ENCODE measurements at regions of chr4 and their contacts with region 1.

Region 1: DNA sequence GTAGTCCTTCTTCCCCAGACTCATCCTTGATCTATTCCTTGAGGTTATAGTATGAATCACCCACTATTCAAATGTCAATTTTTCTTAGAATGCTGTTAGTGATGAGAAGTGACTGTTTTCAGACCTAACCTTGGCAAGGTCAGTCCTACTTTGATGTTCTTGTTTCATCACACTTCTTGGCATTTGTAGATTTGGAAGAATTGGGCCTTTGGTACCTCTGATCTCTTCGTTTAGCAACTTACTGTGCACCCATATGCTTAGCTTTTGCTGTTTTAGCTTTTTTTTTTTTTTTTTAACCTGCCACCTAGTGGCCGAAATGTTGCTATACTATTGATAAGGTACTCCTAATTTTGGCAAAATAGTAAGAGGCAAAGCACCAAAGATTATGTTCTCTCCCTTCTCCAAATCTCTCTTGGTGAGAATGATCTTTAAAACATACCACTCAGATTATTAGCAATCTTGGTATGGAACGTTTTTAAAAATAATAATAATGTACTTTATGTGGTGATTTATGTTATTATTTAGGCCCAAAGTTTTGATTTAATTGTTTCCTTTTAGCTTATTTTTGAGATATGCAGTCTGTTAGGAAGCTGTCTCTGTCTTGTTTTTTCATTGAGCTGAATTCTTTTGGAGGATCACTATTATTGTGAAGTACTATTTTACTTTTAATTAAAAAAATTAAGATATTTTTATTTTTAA is 16.6 kb downstream of the DCK start:
- DNase-seq: no peak
- ATAC-seq: peak; percentile 66
- H3K4me3 Mint-ChIP-seq: no peak overlapping the region
- H3K27ac Mint-ChIP-seq: peak overlapping the region; percentile 46
- H3K4me1 Mint-ChIP-seq: peaks cover 38% of the 10 kb centered on the region
- H3K27me3 Mint-ChIP-seq: no peaks in the 10 kb centered on the region

Region 2: GRCh38 chr4:70651864-70652506 is 358.1 kb before region 1 on chr4:
- CTCF ChIA-PET with region 1: interaction called, 13 read pairs
- POLR2A ChIA-PET with region 1: no interaction called
- DNase-seq: no peak
- ATAC-seq: peak; percentile 55
- H3K4me3 Mint-ChIP-seq: no peak overlapping the region
- H3K27ac Mint-ChIP-seq: no peak overlapping the region
- H3K4me1 Mint-ChIP-seq: peaks cover 8% of the 10 kb centered on the region
- H3K27me3 Mint-ChIP-seq: peaks cover 7% of the 10 kb centered on the region

Region 3: GRCh38 chr4:70993181-70994068 is 16.6 kb before region 1 on chr4 and contains the start of gene DCK:
- CTCF ChIA-PET with region 1: interaction called, 58 read pairs
- POLR2A ChIA-PET with region 1: interaction called, 20 read pairs
- DNase-seq: peak; percentile 86
- ATAC-seq: peak; percentile 86
- H3K4me3 Mint-ChIP-seq: peak within 1 kb of the TSS; percentile 96
- H3K27ac Mint-ChIP-seq: peak within 1 kb of the TSS; percentile 88
- H3K4me1 Mint-ChIP-seq: peaks cover 38% of the 10 kb centered on the region
- H3K27me3 Mint-ChIP-seq: no peaks in the 10 kb centered on the region
- total RNA-seq, gene DCK: 74.2 to 77.3 TPM

Region 4: GRCh38 chr4:71020611-71021010 is 10.6 kb after region 1 on chr4:
- CTCF ChIA-PET with region 1: interaction called, 16 read pairs
- POLR2A ChIA-PET with region 1: no interaction called
- DNase-seq: no peak
- ATAC-seq: no peak
- H3K4me3 Mint-ChIP-seq: no peak overlapping the region
- H3K27ac Mint-ChIP-seq: no peak overlapping the region
- H3K4me1 Mint-ChIP-seq: peaks cover 3% of the 10 kb centered on the region
- H3K27me3 Mint-ChIP-seq: no peaks in the 10 kb centered on the region

Region 5: GRCh38 chr4:71026086-71026485 is 16.0 kb after region 1 on chr4:
- CTCF ChIA-PET with region 1: interaction called, 16 read pairs
- POLR2A ChIA-PET with region 1: no interaction called
- DNase-seq: no peak
- ATAC-seq: no peak
- H3K4me3 Mint-ChIP-seq: no peak overlapping the region
- H3K27ac Mint-ChIP-seq: no peak overlapping the region
- H3K4me1 Mint-ChIP-seq: peaks cover 3% of the 10 kb centered on the region
- H3K27me3 Mint-ChIP-seq: no peaks in the 10 kb centered on the region